BJ (cell line): ENCODE measurements at regions of chr3 and their contacts with region 1.

Region 1: DNA sequence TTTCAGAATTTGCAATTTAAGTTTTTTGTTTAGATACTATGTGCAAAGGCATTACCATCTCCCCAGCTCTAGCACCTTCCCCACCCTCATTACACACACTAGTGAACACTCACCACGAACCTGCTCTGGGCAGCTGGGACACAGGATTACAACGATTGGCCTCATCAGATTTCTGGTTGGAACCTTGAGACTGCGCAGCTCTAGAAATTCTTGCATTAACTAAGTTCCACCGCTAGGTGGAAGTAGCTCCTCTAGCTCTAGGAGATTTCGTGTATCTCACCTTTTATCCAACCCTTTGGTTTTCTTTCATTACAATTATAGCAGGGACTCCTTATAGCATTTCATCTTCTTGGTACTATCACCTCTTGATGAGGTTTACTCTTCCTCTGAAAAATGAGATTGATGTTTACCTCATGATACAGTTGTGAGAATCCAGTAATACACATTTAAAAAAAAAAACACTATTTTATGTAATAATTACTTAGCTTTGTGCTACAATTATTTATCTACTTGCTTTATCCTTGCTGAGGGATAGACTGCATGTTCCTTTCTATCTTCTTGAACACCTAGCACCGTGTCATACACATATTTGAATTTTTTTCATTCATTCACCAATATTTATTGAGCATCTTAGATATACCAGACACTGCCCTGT is 28.7 kb upstream of the PLOD2 start:
- DNase-seq: no peak
- H3K4me3 ChIP-seq: no peak overlapping the region
- H3K27me3 ChIP-seq: no peaks in the 10 kb centered on the region
- CTCF ChIP-seq: peak; percentile 76

Region 2: DNA sequence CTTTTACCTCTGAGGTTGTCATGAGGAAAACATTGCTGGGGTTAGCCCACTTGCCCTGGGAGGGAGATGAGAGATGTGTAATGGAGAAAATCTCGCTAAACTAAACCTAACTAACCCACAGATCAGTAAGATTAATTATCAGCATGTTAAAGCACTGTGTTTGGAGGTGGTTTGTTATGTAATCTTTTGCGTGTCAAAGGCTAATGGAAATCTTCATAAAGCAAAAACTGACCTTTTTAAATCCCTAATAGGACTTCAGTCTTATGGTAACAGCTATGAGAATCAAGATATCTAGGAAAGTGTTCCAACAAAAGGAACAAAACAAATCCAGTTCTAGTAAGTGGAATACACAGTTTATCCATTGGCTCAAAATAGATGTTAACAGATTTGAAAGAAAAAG is 131.4 kb before region 1 on chr3:
- CTCF ChIA-PET with region 1: interaction called, 17 read pairs
- POLR2A ChIA-PET with region 1: no interaction called
- DNase-seq: no peak
- H3K4me3 ChIP-seq: no peak overlapping the region
- H3K27me3 ChIP-seq: no peaks in the 10 kb centered on the region
- CTCF ChIP-seq: no peak

Region 3: GRCh38 chr3:146166450-146167225 is 23.0 kb before region 1 on chr3:
- CTCF ChIA-PET with region 1: interaction called, 13 read pairs
- POLR2A ChIA-PET with region 1: no interaction called
- DNase-seq: peak; percentile 58
- H3K4me3 ChIP-seq: no peak overlapping the region
- H3K27me3 ChIP-seq: no peaks in the 10 kb centered on the region
- CTCF ChIP-seq: no peak

Region 4: GRCh38 chr3:146200461-146201220 is 11.0 kb after region 1 on chr3:
- CTCF ChIA-PET with region 1: interaction called, 10 read pairs
- POLR2A ChIA-PET with region 1: no interaction called
- DNase-seq: no peak
- H3K4me3 ChIP-seq: no peak overlapping the region
- H3K27me3 ChIP-seq: no peaks in the 10 kb centered on the region
- CTCF ChIP-seq: no peak

Region 5: GRCh38 chr3:146577662-146578061 is 388.0 kb after region 1 on chr3:
- CTCF ChIA-PET with region 1: interaction called, 18 read pairs
- POLR2A ChIA-PET with region 1: no interaction called
- DNase-seq: no peak
- H3K4me3 ChIP-seq: no peak overlapping the region
- H3K27me3 ChIP-seq: no peaks in the 10 kb centered on the region
- CTCF ChIP-seq: peak; percentile 26; the same call in 1 of the 2 replicates